Mammary epithelial cell (primary cell): ENCODE measurements at regions of chr14 and their contacts with region 1.

Region 1: DNA sequence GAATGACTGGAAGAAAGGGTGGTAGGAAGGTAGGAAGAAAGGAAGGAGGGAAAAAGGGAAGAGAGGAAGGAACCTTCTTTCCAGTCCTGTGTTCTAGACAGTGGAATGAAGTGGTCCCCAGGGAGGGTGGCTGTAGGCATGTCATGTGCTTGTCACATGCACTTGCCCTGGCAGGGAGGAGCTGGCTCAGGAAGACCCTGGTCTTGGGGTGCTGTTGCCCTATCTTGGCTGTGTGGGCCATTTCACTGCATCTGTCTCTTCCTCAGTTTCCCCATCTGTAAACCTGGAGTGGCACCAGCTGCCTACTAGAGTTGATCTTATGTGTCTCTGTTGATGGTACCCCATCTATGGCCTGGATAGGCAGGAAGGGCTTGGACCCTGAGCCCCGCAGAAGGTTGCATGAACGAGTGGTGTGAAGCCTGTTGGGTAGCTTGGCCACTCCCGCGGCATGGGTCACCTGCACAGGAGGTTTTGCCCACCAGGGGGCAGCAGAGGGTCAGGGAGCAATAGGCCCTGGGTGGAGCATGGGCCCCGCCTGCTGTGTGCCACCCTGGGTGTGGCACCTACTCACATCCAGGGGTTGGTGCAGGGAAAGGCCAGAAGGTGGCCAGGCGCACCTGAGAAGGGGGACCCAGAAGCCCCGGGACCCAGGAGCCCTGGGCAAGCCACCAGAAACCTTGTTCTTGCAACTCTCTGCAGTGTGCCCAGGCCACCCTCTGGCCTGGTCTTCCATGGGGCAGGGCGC is 25.1 kb downstream of the MEG3 start:
- DNase-seq: peak; percentile 27
- H3K4me3 ChIP-seq: no peak overlapping the region
- H3K27ac ChIP-seq: no peak overlapping the region
- H3K4me1 ChIP-seq: no peaks in the 10 kb centered on the region
- H3K27me3 ChIP-seq: no peaks in the 10 kb centered on the region
- CTCF ChIP-seq: peak; percentile 75 to 89

Region 2: GRCh38 chr14:100786131-100786530 is 64.9 kb before region 1 on chr14:
- CTCF ChIA-PET with region 1: no interaction called
- dilution Hi-C with region 1: loop called (anchors 5 kb)
- in situ Hi-C with region 1: no loop called
- intact Hi-C with region 1: no loop called
- DNase-seq: no peak
- H3K4me3 ChIP-seq: no peak overlapping the region
- H3K27ac ChIP-seq: no peak overlapping the region
- H3K4me1 ChIP-seq: no peaks in the 10 kb centered on the region
- H3K27me3 ChIP-seq: no peaks in the 10 kb centered on the region
- CTCF ChIP-seq: no peak

Region 3: DNA sequence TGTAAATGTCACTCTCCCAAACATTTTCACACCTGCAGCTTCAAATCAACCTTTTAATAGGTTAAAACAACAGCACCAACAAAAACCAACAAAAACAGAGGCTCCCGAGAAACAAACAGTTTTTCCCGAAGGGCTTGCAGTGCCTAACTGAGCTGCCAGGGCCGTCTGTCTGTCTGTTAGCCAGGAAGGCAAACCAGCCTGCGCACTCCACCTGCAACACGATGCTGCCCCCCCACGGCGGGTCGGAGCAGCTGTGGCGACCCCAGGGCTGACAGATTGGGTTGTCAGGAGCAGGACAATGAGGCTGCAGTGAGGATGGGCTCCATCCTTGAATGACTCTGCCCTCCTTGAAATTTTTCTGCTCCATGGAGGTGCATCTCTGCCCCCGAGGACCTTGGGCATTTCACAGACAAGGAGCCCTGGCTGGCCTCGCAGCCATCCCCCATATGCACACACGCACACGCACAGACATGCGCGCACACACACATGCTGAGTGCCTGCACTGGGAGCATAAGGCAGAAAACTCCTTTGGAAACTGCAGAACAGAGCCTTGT is 49.9 kb after region 1 on chr14:
- CTCF ChIA-PET with region 1: no interaction called
- dilution Hi-C with region 1: loop called (anchors 5 kb)
- in situ Hi-C with region 1: no loop called
- intact Hi-C with region 1: loop called (anchors 2 kb)
- DNase-seq: no peak
- H3K4me3 ChIP-seq: no peak overlapping the region
- H3K27ac ChIP-seq: no peak overlapping the region
- H3K4me1 ChIP-seq: no peaks in the 10 kb centered on the region
- H3K27me3 ChIP-seq: peaks cover 2% of the 10 kb centered on the region
- CTCF ChIP-seq: peak in 1 of 2 donors; percentile 29

Region 4: DNA sequence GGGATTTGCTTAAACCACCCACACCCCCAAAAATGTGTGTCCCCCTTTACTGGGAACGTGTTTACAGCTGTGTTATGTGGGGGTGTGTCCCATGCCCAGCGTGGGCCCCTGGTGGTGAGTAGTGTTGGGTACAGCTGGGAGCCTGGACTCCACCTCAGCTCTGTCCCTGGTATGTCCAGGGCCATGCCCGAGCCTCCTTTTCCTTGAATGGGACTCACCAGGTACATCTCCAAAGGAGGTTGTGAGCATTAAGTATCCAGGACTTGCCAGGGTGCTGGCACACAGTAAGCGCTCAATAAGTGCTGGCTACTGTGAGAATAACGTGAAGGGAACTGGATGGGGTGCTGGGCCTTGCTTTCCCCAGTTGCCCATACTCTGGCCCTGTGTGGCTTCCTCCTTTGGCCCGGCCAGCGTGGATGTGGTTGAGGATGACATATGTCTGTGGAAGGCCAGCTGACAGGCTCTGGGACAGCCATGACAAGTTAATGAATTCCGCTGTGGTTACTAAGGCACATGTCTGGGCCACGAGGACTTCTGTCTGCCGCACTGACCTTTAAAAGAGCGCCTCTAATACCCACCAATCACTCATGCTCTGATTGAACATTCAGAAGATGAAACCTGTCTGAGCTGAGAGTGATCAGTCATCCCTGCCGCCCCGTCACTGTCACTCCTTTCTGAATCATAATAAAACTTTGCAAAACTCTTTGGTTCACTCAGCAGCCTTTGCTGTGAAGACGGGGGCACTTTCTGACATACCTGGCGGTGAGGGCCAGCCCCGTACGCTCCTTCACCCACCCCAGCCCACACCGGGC is 784.9 kb after region 1 on chr14:
- CTCF ChIA-PET with region 1: no interaction called
- dilution Hi-C with region 1: loop called (anchors 5 kb)
- in situ Hi-C with region 1: loop called in 1 of 2 experiments (anchors 25 kb)
- intact Hi-C with region 1: no loop called
- DNase-seq: no peak
- H3K4me3 ChIP-seq: no peak overlapping the region
- H3K27ac ChIP-seq: no peak overlapping the region
- H3K4me1 ChIP-seq: no peaks in the 10 kb centered on the region
- H3K27me3 ChIP-seq: no peaks in the 10 kb centered on the region
- CTCF ChIP-seq: no peak